Natural killer cell (primary cell): ENCODE measurements at regions of chr17 and their contacts with region 1.

Region 1: GRCh38 chr17:76296186-76296585 is 11.9 kb downstream of the QRICH2 start:
- DNase-seq: no peak
- ATAC-seq: no peak
- H3K4me3 ChIP-seq: no peak overlapping the region
- H3K4me3 Mint-ChIP-seq: no peak overlapping the region
- H3K27ac ChIP-seq: no peak overlapping the region
- H3K27ac Mint-ChIP-seq: no peak overlapping the region
- H3K4me1 ChIP-seq: no peaks in the 10 kb centered on the region
- H3K4me1 Mint-ChIP-seq: no peaks in the 10 kb centered on the region
- H3K27me3 ChIP-seq: no peaks in the 10 kb centered on the region
- H3K27me3 Mint-ChIP-seq: no peaks in the 10 kb centered on the region
- CTCF ChIP-seq: no peak

Region 2: GRCh38 chr17:76014184-76014924 is 281.8 kb before region 1 on chr17:
- intact Hi-C with region 1: loop called (anchors 1 kb)
- DNase-seq: peak; percentile 61 to 89
- ATAC-seq: peak; percentile 86 to 99 (median 98)
- H3K4me3 ChIP-seq: no peak overlapping the region
- H3K4me3 Mint-ChIP-seq: no peak overlapping the region
- H3K27ac ChIP-seq: no peak overlapping the region
- H3K27ac Mint-ChIP-seq: peak overlapping the region in 1 of 2 donors; percentile 57
- H3K4me1 ChIP-seq: peaks cover 8% of the 10 kb centered on the region
- H3K4me1 Mint-ChIP-seq: peaks cover 0 to 7% of the 10 kb centered on the region in 2 donors
- H3K27me3 ChIP-seq: no peaks in the 10 kb centered on the region
- H3K27me3 Mint-ChIP-seq: no peaks in the 10 kb centered on the region
- CTCF ChIP-seq: peak; percentile 97

Region 3: DNA sequence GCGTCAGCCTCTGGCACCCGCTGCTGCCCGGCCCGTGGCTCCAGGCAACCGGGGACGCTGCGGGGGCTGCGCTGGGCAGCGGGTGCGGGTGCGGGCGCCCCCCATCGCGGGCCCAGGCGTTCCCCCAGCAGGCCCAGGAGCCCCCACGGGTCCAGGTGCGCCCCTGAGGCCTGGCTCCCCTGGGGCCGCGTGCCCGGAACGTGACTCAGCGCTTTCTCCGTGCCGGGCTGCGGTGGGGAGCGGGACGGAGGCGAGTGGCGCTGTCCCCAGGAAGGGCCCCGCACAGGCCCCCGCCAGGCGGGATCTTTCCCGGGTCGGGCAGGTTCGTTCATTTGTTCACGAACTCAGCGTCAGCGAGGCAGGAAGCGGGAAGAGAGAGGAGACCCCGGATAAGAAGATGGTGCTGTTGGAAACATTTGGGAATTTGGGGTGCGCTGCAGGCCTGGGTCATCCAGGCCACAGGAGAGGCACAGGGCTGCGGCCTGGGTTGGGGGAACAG is 174.2 kb before region 1 on chr17:
- intact Hi-C with region 1: loop called (anchors 1 kb)
- DNase-seq: peak in 1 of 2 donors; percentile 38
- ATAC-seq: peak; percentile 28 to 36 (median 31)
- H3K4me3 ChIP-seq: peak overlapping the region; percentile 49
- H3K4me3 Mint-ChIP-seq: peak overlapping the region; percentile 58
- H3K27ac ChIP-seq: no peak overlapping the region
- H3K27ac Mint-ChIP-seq: peak overlapping the region in 1 of 2 donors; percentile 82
- H3K4me1 ChIP-seq: peaks cover 14% of the 10 kb centered on the region
- H3K4me1 Mint-ChIP-seq: peaks cover 0 to 19% of the 10 kb centered on the region in 2 donors
- H3K27me3 ChIP-seq: no peaks in the 10 kb centered on the region
- H3K27me3 Mint-ChIP-seq: no peaks in the 10 kb centered on the region
- CTCF ChIP-seq: no peak

Region 4: DNA sequence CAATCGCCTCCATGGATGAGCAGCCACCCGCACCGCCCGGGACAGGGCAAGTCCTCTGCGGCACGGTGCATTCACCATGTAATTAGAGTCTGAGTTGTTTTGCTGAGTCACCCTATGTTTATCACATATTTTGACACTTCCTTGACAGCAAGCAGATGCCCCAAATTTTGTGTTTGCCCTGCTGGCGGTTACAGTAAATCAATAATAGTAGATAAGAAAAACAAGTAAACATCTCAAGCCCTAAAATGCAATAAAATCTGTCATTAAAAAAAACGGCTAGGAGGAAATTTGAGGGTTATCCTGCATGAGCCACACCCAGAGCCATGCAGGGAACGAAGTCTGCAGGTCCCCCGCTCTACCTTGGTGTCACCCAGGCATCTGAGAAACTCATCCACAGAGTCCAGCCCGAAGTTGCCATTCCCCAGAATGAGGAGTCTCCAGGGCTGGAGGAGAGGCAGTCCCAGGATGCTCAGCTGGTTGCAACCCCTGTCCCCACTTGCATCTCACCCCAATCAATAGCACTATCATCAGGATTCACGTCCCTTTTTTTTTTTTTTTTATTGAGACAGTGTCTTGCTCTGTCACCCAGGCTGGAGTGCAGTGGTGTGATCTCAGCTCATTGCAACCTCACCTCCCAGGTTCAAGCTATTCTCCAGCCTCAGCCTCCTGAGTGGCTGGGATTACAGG is 363.9 kb after region 1 on chr17:
- intact Hi-C with region 1: no loop called
- DNase-seq: peak in 1 of 2 donors; percentile 57
- ATAC-seq: peak; percentile 83 to 94 (median 84)
- H3K4me3 ChIP-seq: no peak overlapping the region
- H3K4me3 Mint-ChIP-seq: peak overlapping the region; percentile 28
- H3K27ac ChIP-seq: no peak overlapping the region
- H3K27ac Mint-ChIP-seq: peak overlapping the region in 1 of 2 donors; percentile 44
- H3K4me1 ChIP-seq: peaks cover 23% of the 10 kb centered on the region
- H3K4me1 Mint-ChIP-seq: peaks cover 20% of the 10 kb centered on the region in 2 donors
- H3K27me3 ChIP-seq: no peaks in the 10 kb centered on the region
- H3K27me3 Mint-ChIP-seq: peaks cover 0 to 6% of the 10 kb centered on the region in 2 donors
- CTCF ChIP-seq: no peak